ENCODE measurements at regions of chr17 and their contacts with region 1.

Region 1: DNA sequence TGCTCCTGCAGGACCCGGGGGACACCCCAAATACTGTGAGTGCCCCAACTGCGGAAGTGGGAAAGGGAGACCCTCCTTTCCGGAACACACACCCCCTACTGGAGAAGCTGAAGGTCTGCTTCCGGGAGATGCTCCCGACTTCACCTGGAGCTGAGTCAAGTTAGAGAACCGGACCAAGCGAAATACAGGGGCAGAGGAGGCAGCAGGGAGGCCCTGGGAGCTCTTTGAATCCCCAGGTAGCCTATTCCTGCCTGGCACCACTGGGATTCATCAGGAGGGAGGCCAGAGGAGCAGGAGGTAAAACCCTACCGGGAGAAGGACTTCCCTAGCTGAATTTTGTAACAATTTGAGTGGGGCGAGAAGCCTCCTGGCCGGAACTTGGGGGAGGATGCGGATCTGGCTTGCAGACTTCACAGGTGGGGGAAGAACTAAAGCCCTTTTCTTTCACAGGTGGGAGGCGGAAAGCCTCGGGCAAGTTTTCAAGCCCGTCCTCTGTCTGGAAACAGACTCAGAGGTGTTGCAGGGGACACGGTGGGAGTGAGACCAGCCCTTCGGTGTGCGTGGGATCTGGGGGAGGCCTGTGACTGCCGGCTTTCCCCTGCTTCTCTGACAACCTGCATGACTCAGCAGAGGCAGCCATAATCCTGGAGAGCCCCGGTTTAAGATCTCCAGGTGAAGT is 22.4 kb upstream of the TEKT1 start:
- DNase-seq: no peak
- H3K4me3 ChIP-seq: peak overlapping the region in 2 of 3 donors; percentile 45 to 57
- H3K27ac ChIP-seq: peak overlapping the region; percentile 75 to 79
- H3K4me1 ChIP-seq: no peaks in the 10 kb centered on the region
- H3K27me3 ChIP-seq: no peaks in the 10 kb centered on the region
- CTCF ChIP-seq: peak in 2 of 3 donors; percentile 23 to 36
- POLR2A ChIP-seq: no peak

Region 2: DNA sequence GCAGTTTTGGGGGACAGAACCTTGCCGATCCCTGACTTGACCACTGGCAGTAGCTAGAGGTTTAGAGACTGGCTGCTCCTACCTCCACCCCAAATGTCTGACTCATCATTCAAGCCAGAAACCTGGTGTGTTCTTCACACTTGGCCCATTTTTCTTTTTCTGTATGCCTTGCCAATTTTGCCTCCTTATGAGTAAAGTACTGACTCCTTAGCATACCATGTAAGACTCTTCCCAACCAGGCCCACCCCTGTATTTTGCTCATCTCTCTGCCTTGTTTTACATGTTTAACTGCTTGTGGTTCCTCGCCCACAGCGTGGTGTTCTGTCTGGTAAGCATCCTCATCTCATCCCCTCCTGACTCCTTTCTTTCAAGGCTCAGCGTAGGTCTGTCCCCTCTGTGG is 1472.4 kb before region 1 on chr17:
- intact Hi-C with region 1: loop called (anchors 10 kb)
- DNase-seq: no peak
- H3K4me3 ChIP-seq: no peak overlapping the region
- H3K27ac ChIP-seq: no peak overlapping the region
- H3K4me1 ChIP-seq: no peaks in the 10 kb centered on the region
- H3K27me3 ChIP-seq: no peaks in the 10 kb centered on the region
- CTCF ChIP-seq: no peak
- POLR2A ChIP-seq: no peak

Region 3: DNA sequence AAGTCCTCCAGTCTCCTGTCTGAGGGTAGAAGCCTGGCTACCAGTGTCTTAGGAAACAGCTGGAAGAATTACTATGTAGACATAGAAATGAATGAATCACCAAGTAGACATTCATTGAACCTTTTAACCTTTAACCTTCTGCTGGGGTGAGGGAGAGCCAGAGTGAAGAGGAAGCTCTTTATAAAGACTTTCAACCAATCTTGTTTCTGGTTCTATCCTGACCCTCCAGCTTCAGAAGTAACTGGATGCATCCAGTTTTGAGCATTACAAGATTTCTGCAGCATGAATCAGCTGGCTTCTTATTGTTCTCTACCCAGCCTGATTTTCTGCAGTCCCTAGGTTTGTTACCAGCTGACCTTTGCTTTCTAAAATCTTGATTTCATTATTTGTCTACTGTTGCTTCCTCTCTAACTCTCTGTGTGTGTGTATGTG is 30.9 kb before region 1 on chr17:
- intact Hi-C with region 1: no loop called
- DNase-seq: no peak
- H3K4me3 ChIP-seq: no peak overlapping the region
- H3K27ac ChIP-seq: no peak overlapping the region
- H3K4me1 ChIP-seq: no peaks in the 10 kb centered on the region
- H3K27me3 ChIP-seq: no peaks in the 10 kb centered on the region
- CTCF ChIP-seq: no peak
- POLR2A ChIP-seq: no peak

Measured in breast epithelium (tissue), 4 donors.